PC-9 (cell line): ENCODE measurements at regions of chr14 and their contacts with region 1.

Region 1: GRCh38 chr14:60724137-60724619 is at the start of gene SIX4:
- DNase-seq: peak; percentile 89 to 93
- H3K4me3 ChIP-seq: peak within 1 kb of the TSS; percentile 78
- H3K27ac ChIP-seq: peak within 1 kb of the TSS; percentile 80
- H3K4me1 ChIP-seq: peaks cover 26% of the 10 kb centered on the region
- H3K27me3 ChIP-seq: no peaks in the 10 kb centered on the region
- CTCF ChIP-seq: no peak
- total RNA-seq, gene SIX4: 31.0 and 35.7 TPM in 2 replicates

Region 2: DNA sequence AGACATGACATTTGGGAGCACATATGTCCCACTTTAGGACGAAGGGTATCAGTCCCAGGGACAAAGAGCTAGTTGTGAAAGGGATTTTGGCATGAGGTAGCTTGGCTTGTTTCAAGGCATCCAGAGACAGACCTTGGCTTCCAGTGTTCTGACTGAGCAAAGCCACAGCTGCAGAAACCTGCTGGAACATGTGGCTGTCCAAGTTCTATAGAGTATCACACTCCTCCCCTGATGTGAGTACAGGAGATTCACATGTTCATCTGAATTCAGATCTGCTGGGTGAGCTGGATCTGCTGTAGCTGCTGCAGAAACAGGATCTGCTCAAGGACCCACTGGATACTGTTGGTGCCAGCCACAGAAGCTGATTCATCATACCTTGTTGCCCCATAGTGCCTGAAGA is 228.2 kb before region 1 on chr14:
- CTCF ChIA-PET with region 1: no interaction called
- POLR2A ChIA-PET with region 1: no interaction called
- intact Hi-C with region 1: no loop called
- DNase-seq: no peak
- H3K4me3 ChIP-seq: no peak overlapping the region
- H3K27ac ChIP-seq: no peak overlapping the region
- H3K4me1 ChIP-seq: no peaks in the 10 kb centered on the region
- H3K27me3 ChIP-seq: peaks cover 6% of the 10 kb centered on the region; the same call in 1 of the 2 replicates
- CTCF ChIP-seq: no peak

Region 3: DNA sequence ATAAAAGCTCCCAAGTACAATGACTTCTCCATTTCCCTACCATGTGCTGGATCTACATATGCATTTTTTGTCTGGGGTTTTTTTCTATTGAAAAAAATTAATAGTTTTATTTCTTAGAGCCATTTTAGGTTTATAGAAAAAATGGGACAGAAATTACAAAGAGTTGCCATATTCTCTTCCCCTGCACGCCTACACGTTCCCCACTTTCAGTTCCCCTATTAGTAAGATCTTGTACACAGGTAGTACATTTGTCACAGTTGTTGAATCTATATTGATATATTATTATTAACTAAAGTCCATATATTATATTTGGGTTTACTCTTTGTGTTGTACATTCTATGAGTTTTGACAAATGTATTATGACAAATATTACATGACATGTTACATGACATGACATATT is 179.5 kb before region 1 on chr14:
- CTCF ChIA-PET with region 1: no interaction called
- POLR2A ChIA-PET with region 1: no interaction called
- intact Hi-C with region 1: no loop called
- DNase-seq: no peak
- H3K4me3 ChIP-seq: no peak overlapping the region
- H3K27ac ChIP-seq: no peak overlapping the region
- H3K4me1 ChIP-seq: no peaks in the 10 kb centered on the region
- H3K27me3 ChIP-seq: no peaks in the 10 kb centered on the region
- CTCF ChIP-seq: no peak

Region 4: GRCh38 chr14:60656686-60657455 is 67.3 kb before region 1 on chr14:
- CTCF ChIA-PET with region 1: no interaction called
- POLR2A ChIA-PET with region 1: no interaction called
- intact Hi-C with region 1: loop called (anchors 2 kb)
- DNase-seq: peak in 1 of 2 experiments; percentile 80
- H3K4me3 ChIP-seq: peak overlapping the region; percentile 63
- H3K27ac ChIP-seq: no peak overlapping the region
- H3K4me1 ChIP-seq: 0 out of 2 replicates have a peak, but pooled peaks cover 6% of the 10 kb centered on the region
- H3K27me3 ChIP-seq: no peaks in the 10 kb centered on the region
- CTCF ChIP-seq: peak; percentile 64

Region 5: GRCh38 chr14:60670989-60671388 is 53.2 kb before region 1 on chr14:
- CTCF ChIA-PET with region 1: no interaction called
- POLR2A ChIA-PET with region 1: no interaction called
- intact Hi-C with region 1: no loop called
- DNase-seq: no peak
- H3K4me3 ChIP-seq: no peak overlapping the region
- H3K27ac ChIP-seq: no peak overlapping the region
- H3K4me1 ChIP-seq: no peaks in the 10 kb centered on the region; the same call in 1 of the 2 replicates
- H3K27me3 ChIP-seq: no peaks in the 10 kb centered on the region
- CTCF ChIP-seq: no peak

Region 6: GRCh38 chr14:60805841-60806569 is 81.8 kb after region 1 on chr14:
- CTCF ChIA-PET with region 1: interaction called, 10 read pairs
- POLR2A ChIA-PET with region 1: interaction called, 3 read pairs
- intact Hi-C with region 1: no loop called
- DNase-seq: no peak
- H3K4me3 ChIP-seq: no peak overlapping the region
- H3K27ac ChIP-seq: no peak overlapping the region
- H3K4me1 ChIP-seq: no peaks in the 10 kb centered on the region
- H3K27me3 ChIP-seq: no peaks in the 10 kb centered on the region
- CTCF ChIP-seq: no peak

Region 7: DNA sequence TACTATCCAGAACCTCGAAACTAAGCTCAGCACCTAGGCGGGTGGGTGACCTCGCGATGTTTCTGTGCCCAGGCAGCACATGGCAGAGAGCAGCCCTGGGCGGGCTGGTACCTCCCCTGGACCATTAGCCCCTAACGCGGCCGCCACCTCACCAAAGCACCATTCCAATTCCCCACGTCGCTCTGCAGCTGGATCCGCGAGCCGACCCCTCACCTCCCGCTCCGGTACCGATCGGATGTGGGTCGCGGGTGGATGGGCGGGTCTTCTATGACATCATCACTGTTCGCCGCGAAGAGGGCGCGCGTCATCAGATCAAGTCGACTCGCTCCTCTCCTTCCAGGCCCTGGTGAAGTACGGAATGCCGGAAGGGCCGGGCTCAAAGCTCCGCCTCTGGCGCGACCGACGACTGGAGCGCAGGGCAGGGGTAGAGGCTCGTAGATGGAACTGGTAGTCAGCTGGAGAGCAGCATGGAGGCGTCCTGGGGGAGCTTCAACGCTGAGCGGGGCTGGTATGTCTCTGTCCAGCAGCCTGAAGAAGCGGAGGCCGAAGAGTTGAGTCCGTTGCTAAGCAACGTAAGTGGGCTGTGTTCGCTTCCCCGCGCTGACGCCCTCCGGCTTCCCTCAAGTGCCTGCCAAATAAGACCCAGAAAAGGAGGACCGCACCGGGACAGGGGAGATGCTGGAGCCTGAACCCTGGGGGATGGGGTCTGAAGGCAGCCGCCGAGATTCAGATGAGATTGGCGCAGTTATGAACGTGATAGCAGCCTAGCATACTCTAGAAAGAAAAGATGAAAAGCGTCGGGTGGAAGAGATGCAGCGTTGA is 256.8 kb after region 1 on chr14 and contains the starts of genes SLC38A6 and TRMT5:
- CTCF ChIA-PET with region 1: interaction called, 5 read pairs
- POLR2A ChIA-PET with region 1: interaction called, 6 read pairs
- intact Hi-C with region 1: loop called (anchors 2 kb)
- DNase-seq: peak; percentile 92 to 95
- H3K4me3 ChIP-seq: peak within 1 kb of the TSS; percentile 99
- H3K27ac ChIP-seq: peak within 1 kb of the TSS; percentile 78
- H3K4me1 ChIP-seq: peaks cover 36% of the 10 kb centered on the region
- H3K27me3 ChIP-seq: no peaks in the 10 kb centered on the region
- CTCF ChIP-seq: no peak
- total RNA-seq, gene SLC38A6: 44.7 and 45.5 TPM in 2 replicates
- total RNA-seq, gene TRMT5: 17.3 and 17.6 TPM in 2 replicates

Region 8: DNA sequence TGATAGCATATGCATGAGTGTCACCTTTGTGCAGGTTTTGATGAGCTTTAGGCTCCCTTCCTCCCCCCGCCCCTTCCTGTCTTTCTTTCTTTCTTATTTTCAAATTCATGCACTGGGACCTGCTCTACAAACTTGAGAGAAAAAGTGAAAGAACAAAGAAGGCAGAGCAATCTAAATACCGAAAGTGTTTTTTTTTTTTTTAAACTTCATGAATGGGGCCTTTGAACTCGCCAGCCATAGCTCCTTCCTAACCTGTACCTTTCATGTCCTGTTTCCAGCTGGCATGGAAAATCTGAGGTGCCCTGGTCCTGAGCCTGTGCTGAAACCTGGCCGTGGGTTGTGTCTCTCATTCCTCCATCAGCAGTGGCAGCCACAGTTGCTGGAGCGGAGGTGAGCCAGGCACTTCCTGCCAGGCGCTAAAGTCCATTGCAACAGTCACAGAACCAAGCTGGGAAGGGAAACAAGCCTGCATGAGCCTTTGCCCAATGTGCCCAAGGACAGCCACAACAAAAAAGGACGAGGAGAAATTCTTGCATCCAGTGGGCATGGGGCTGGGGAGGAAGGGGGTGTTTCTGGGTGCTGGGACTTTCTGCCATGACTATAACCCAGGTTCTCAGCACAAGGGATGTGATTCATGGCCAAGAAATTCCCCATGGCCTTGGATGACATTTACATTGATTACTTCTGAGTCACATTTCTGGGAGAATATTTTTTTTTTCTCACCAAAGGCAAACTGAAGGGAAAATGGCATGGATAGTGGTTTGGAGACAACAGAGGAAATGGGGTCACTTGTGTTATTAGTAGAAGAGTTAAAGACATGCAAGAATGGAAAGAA is 454.3 kb after region 1 on chr14:
- CTCF ChIA-PET with region 1: no interaction called
- POLR2A ChIA-PET with region 1: interaction called, 9 read pairs
- intact Hi-C with region 1: loop called (anchors 5 kb)
- DNase-seq: peak; percentile 80 to 95
- H3K4me3 ChIP-seq: peak overlapping the region; percentile 50
- H3K27ac ChIP-seq: peak overlapping the region; percentile 98
- H3K4me1 ChIP-seq: peaks cover 47% of the 10 kb centered on the region
- H3K27me3 ChIP-seq: no peaks in the 10 kb centered on the region
- CTCF ChIP-seq: peak; percentile 16; the same call in 1 of the 2 replicates